ENCODE measurements at regions of chr5 and their contacts with region 1.

Region 1: GRCh38 chr5:61331407-61332357 is at the start of gene ZSWIM6:
- DNase-seq: peak; percentile 98
- H3K4me3 Mint-ChIP-seq: peak within 1 kb of the TSS; percentile 84
- H3K27ac Mint-ChIP-seq: peak within 1 kb of the TSS; percentile 87
- H3K4me1 Mint-ChIP-seq: peaks cover 43% of the 10 kb centered on the region
- H3K27me3 Mint-ChIP-seq: peaks cover 17% of the 10 kb centered on the region
- total RNA-seq, gene ZSWIM6: 5.5 to 5.7 TPM

Region 2: GRCh38 chr5:60699530-60700382 is 631.9 kb before region 1 on chr5 and contains the start of gene DEPDC1B:
- CTCF ChIA-PET with region 1: no interaction called
- POLR2A ChIA-PET with region 1: interaction called, 3 read pairs
- intact Hi-C with region 1: loop called (anchors 2 kb)
- DNase-seq: peak; percentile 93
- H3K4me3 Mint-ChIP-seq: peak within 1 kb of the TSS; percentile 87
- H3K27ac Mint-ChIP-seq: peak within 1 kb of the TSS; percentile 72
- H3K4me1 Mint-ChIP-seq: peaks cover 18% of the 10 kb centered on the region
- H3K27me3 Mint-ChIP-seq: no peaks in the 10 kb centered on the region
- total RNA-seq, gene DEPDC1B: 33.2 to 33.6 TPM

Region 3: GRCh38 chr5:61055434-61056006 is 276.2 kb before region 1 on chr5:
- CTCF ChIA-PET with region 1: interaction called, 3 read pairs
- POLR2A ChIA-PET with region 1: no interaction called
- intact Hi-C with region 1: loop called (anchors 10 kb)
- DNase-seq: no peak
- H3K4me3 Mint-ChIP-seq: no peak overlapping the region
- H3K27ac Mint-ChIP-seq: no peak overlapping the region
- H3K4me1 Mint-ChIP-seq: peaks cover 4% of the 10 kb centered on the region
- H3K27me3 Mint-ChIP-seq: no peaks in the 10 kb centered on the region

Region 4: DNA sequence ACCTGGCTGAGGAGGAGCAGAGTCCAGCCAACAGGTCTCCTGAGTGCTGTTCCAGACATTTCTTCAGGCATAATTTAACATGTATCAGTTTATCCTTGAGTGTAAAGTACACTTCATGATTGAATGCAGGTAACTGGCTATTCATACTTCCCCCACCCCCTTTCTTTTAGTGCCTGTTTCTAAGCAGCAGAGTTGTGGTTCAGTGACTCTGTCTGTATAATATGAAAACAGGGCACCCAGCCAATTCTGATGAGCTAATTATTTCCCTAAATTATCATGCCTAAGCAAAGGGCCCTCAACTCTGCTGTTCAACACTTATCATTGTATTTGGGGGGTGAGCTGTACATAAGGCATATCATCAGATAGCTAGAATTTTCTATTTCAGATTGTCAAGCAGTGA is 51.5 kb before region 1 on chr5:
- CTCF ChIA-PET with region 1: interaction called, 3 read pairs
- POLR2A ChIA-PET with region 1: no interaction called
- intact Hi-C with region 1: loop called (anchors 1 kb)
- DNase-seq: no peak
- H3K4me3 Mint-ChIP-seq: no peak overlapping the region
- H3K27ac Mint-ChIP-seq: no peak overlapping the region
- H3K4me1 Mint-ChIP-seq: peaks cover 28% of the 10 kb centered on the region
- H3K27me3 Mint-ChIP-seq: no peaks in the 10 kb centered on the region

Region 5: GRCh38 chr5:61534481-61535267 is 203.0 kb after region 1 on chr5:
- CTCF ChIA-PET with region 1: no interaction called
- POLR2A ChIA-PET with region 1: no interaction called
- intact Hi-C with region 1: loop called (anchors 10 kb)
- DNase-seq: peak; percentile 28
- H3K4me3 Mint-ChIP-seq: no peak overlapping the region
- H3K27ac Mint-ChIP-seq: peak overlapping the region; percentile 54
- H3K4me1 Mint-ChIP-seq: peaks cover 18% of the 10 kb centered on the region
- H3K27me3 Mint-ChIP-seq: no peaks in the 10 kb centered on the region

Region 6: GRCh38 chr5:61658592-61659008 is 326.9 kb after region 1 on chr5:
- CTCF ChIA-PET with region 1: interaction called, 3 read pairs
- POLR2A ChIA-PET with region 1: no interaction called
- intact Hi-C with region 1: loop called (anchors 5 kb)
- DNase-seq: peak; percentile 86
- H3K4me3 Mint-ChIP-seq: no peak overlapping the region
- H3K27ac Mint-ChIP-seq: no peak overlapping the region
- H3K4me1 Mint-ChIP-seq: peaks cover 2% of the 10 kb centered on the region
- H3K27me3 Mint-ChIP-seq: peaks cover 8% of the 10 kb centered on the region

Region 7: DNA sequence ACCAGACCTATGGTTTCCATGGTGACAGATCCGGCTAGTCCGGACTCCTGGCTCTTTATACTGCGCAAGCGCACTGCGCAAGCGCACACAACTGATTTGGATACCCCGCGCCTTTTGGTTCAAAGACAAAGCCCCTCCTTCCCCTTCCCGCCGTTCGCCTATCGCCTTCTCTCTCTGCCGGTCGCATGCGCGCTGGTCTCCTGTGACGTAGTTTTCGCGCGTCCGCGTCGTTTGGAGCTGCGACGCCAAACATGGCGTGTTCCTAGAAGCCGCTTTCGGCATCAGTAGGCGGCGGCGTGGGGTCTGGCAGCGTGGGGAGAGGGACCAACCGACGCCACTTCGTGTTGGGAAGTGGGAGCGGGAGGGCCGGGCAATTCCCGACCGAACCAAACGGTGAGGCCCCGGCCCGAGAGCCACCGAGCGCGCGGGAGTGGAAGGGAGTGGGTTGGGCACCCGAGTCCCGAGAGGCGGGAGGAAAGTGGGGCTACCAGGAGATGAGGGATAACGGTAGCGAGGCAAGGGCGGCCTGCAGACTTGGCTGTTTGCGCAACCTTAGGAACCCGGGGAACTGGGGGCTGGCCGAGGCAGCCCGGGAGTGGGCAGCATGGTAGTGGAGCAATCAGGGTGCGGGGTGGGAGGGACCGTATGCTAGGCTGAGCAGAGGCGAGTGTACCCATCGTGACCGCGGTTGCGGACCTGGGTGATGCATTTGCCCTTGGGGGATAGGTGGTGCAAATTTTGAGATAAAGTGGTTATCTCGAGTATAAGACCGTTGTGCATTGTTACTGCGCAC is 1081.1 kb after region 1 on chr5 and contains the start of gene IPO11:
- CTCF ChIA-PET with region 1: no interaction called
- POLR2A ChIA-PET with region 1: no interaction called
- intact Hi-C with region 1: loop called (anchors 10 kb)
- DNase-seq: peak; percentile 100
- H3K4me3 Mint-ChIP-seq: peak within 1 kb of the TSS; percentile 87
- H3K27ac Mint-ChIP-seq: peak within 1 kb of the TSS; percentile 88
- H3K4me1 Mint-ChIP-seq: peaks cover 23% of the 10 kb centered on the region
- H3K27me3 Mint-ChIP-seq: peaks cover 2% of the 10 kb centered on the region
- total RNA-seq, gene IPO11: 55.4 to 59.2 TPM

Measured in activated CD4-positive, alpha-beta memory T cell treated with anti-CD3 and anti-CD28 coated beads for 36 hours (primary cell).